Posterior vena cava (tissue), 2 donors: ENCODE measurements at regions of chr18 and their contacts with region 1.

Region 1: GRCh38 chr18:23883277-23883790 is 131.2 kb upstream of the TTC39C start:
- DNase-seq: no peak

Region 2: GRCh38 chr18:23798249-23798648 is 85.1 kb before region 1 on chr18:
- intact Hi-C with region 1: no loop called
- DNase-seq: no peak

Region 3: GRCh38 chr18:23828426-23828825 is 54.9 kb before region 1 on chr18:
- intact Hi-C with region 1: loop called in 1 of 2 experiments (anchors 10 kb)
- DNase-seq: no peak

Region 4: DNA sequence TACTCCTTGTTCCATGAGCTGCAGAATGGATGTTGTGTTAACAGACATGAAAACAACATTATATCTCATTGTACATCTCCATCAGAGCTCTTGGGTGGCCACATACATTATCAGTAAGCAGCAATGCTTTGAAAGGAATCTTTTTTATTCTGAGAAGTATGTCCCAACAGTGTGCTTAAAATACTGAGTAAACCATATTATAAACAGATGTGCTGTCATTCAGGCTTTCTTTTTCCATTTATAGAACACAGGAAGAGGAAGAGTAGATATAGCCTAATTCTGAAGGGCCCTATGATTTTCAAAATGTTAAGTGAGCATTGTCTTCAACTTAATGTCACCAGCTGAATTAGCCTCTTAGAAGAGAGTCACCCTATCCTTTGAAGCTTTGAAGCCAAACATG is 211.2 kb after region 1 on chr18:
- intact Hi-C with region 1: loop called in 1 of 2 experiments (anchors 5 kb)
- DNase-seq: no peak